Prostate gland (tissue), 2 donors: ENCODE measurements at regions of chrX and their contacts with region 1.

Region 1: GRCh38 chrX:153554519-153555167 is 37.2 kb downstream of the ATP2B3 start:
- DNase-seq: peak; percentile 37
- H3K4me3 ChIP-seq: no peak overlapping the region
- H3K27ac ChIP-seq: no peak overlapping the region
- H3K4me1 ChIP-seq: no peaks in the 10 kb centered on the region
- H3K27me3 ChIP-seq: no peaks in the 10 kb centered on the region
- CTCF ChIP-seq: peak in 3 of 4 experiments; percentile 47 to 67 (median 59)
- POLR2A ChIP-seq: no peak

Region 2: GRCh38 chrX:153333266-153333665 is 221.4 kb before region 1 on chrX:
- intact Hi-C with region 1: no loop called
- DNase-seq: no peak
- H3K4me3 ChIP-seq: no peak overlapping the region
- H3K27ac ChIP-seq: no peak overlapping the region
- H3K4me1 ChIP-seq: no peaks in the 10 kb centered on the region
- H3K27me3 ChIP-seq: no peaks in the 10 kb centered on the region
- CTCF ChIP-seq: no peak
- POLR2A ChIP-seq: no peak

Region 3: DNA sequence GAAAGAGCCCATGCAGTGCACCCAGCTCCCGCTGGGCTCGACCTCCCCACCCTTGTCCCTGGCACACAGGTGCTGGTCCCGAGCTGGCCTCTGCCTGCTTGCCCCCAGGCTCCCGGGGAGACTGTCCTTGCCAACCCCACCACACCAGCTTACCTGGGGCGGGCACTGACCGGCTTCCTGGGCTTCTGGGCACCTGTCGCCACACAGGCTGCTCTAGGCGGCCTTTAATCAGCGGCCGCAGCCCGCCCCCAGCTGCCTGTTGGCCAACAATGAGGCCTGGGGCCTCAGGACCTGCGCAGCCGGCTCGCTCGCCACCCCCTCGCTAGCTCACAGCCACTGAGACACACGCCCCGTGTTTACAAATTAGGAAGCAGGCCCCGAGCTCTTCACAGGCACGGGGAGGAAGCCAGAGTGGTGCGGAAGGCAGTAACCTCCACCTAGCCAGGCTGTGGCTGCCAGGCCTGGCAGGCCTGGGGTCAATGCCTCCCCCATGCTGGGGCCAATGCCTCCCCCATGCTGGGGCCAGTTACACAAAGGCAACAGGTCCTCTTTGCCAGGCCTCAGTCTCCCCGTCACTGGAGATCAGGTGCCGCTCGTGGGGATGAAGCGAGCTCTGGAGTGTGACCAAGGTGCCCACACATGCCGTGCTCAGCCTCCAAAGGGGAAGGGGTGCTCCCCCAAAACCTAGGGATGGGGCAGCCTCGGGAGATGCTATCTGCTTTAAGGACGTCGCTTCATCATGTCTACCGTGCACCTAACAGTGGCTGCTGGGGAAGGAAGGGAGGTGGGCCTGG is 108.6 kb before region 1 on chrX and contains the start of gene TREX2:
- intact Hi-C with region 1: no loop called
- DNase-seq: no peak
- H3K4me3 ChIP-seq: no peak within 1 kb of the TSS
- H3K27ac ChIP-seq: no peak within 1 kb of the TSS
- H3K4me1 ChIP-seq: no peaks in the 10 kb centered on the region
- H3K27me3 ChIP-seq: no peaks in the 10 kb centered on the region
- CTCF ChIP-seq: no peak
- POLR2A ChIP-seq: no peak
- total RNA-seq, gene TREX2: 5.8 to 6.3 TPM

Region 4: GRCh38 chrX:153708415-153708814 is 153.8 kb after region 1 on chrX:
- intact Hi-C with region 1: loop called (anchors 10 kb)
- DNase-seq: peak; percentile 64
- H3K4me3 ChIP-seq: no peak overlapping the region
- H3K27ac ChIP-seq: no peak overlapping the region
- H3K4me1 ChIP-seq: no peaks in the 10 kb centered on the region
- H3K27me3 ChIP-seq: no peaks in the 10 kb centered on the region
- CTCF ChIP-seq: peak in 3 of 4 experiments; percentile 65 to 82 (median 78)
- POLR2A ChIP-seq: no peak